Aorta (tissue), 5 donors: ENCODE measurements at regions of chr14 and their contacts with region 1.

Region 1: GRCh38 chr14:88667555-88668273 is 104.9 kb downstream of the ZC3H14 start:
- DNase-seq: peak in 1 of 2 donors; percentile 50
- ATAC-seq: peak; percentile 87
- H3K4me3 ChIP-seq: no peak overlapping the region
- H3K27ac ChIP-seq: no peak overlapping the region
- H3K4me1 ChIP-seq: no peaks in the 10 kb centered on the region
- H3K27me3 ChIP-seq: no peaks in the 10 kb centered on the region

Region 2: DNA sequence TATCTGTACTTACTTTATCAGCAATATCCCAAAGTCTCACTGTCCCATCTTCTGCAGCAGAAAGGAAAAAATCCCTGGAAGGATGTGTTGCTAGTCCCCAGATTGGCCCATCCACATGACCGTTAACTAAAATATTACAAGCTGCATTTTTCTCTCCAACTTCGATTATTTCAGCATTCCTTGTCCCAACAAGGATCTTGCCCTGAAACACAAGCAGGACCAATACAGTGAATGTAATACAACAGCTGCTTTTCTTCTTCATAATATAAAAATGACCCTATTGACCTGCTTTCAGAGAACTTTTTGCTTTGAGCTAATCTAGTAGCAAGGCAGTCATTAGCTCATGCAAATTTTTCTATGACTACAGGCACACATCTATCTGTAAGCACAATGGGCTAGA is 46.6 kb before region 1 on chr14:
- intact Hi-C with region 1: no loop called
- DNase-seq: no peak
- ATAC-seq: no peak
- H3K4me3 ChIP-seq: no peak overlapping the region
- H3K27ac ChIP-seq: no peak overlapping the region
- H3K4me1 ChIP-seq: no peaks in the 10 kb centered on the region
- H3K27me3 ChIP-seq: no peaks in the 10 kb centered on the region

Region 3: DNA sequence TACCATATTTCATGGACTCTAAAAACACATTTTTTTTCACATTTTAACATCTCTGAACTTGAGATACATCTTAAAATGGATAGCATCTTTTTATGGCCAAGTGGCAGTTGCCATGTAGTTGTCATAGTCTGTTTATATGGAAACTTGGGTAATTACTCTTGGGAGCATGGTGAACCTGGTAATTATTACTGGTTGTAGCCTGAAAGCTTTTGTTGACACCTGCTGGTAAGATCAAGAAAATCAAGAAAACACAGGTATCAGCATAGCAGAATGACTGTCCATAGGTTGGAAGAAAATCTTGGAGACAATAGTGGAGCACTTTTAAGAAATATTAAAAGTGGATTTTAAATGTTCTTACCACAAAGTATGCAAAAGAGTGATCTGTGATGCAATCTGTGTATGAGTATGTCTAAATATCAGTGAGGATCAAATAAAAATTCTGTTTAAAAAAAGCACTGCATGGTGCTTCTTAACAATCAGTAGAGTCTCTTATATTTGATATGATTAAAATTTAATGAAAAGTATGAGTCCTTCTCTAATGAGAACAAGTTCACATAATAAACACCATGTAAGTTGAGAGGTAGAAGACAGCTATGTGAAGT is 200.9 kb after region 1 on chr14:
- intact Hi-C with region 1: loop called (anchors 5 kb)
- DNase-seq: no peak
- ATAC-seq: no peak
- H3K4me3 ChIP-seq: no peak overlapping the region
- H3K27ac ChIP-seq: no peak overlapping the region
- H3K4me1 ChIP-seq: no peaks in the 10 kb centered on the region
- H3K27me3 ChIP-seq: no peaks in the 10 kb centered on the region